Endothelial cell of umbilical vein (primary cell): ENCODE measurements at regions of chr3 and their contacts with region 1.

Region 1: DNA sequence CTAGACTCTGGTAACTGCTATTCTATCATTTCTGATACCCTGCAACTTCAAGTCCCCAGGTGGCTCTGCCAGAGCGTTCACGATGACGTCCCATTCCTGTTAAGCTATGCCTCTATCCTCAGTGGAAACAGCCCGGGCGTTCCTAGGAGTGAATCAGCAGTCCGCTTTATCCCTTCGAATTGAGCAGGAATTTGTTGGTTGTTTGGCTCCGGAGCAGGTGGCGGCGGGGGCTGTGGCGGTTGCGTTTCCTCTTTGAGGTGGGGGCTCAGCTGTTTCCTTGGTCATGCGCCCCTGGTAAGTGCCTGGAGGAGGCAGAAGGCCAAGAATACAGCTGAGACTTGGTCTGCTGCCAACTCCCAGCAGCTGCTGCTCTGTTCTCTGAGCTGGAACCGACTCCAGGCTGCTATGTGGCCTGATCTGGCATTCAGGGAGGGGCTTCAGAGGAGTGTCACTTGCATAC is 25.2 kb downstream of the ARPP21 start:
- DNase-seq: peak; percentile 86
- H3K4me3 ChIP-seq: no peak overlapping the region
- H3K27ac ChIP-seq: no peak overlapping the region
- H3K4me1 ChIP-seq: peaks cover 25% of the 10 kb centered on the region
- H3K27me3 ChIP-seq: no peaks in the 10 kb centered on the region
- CTCF ChIP-seq: no peak
- POLR2A ChIP-seq: no peak

Region 2: DNA sequence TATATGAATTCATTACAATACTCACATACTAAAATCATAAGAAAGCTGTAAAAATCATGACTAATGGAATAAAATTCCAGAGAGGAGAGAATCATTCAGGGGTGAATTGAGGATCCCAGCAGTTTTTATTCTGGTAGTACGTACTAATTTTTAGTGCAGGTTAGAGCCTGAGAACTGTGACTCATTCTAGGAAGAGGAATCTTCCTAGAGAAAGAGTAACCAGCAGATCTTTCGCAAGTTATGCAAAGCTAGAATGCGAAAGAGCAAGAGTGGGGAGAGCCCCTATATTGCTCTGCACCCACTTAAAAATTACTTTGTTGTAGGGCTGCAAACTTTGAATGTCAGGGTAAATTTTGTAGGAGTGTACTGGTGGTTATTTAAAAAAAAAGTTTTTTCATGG is 328.8 kb before region 1 on chr3:
- CTCF ChIA-PET with region 1: no interaction called
- POLR2A ChIA-PET with region 1: no interaction called
- dilution Hi-C with region 1: no loop called
- intact Hi-C with region 1: loop called (anchors 1 kb)
- DNase-seq: no peak
- H3K4me3 ChIP-seq: no peak overlapping the region
- H3K27ac ChIP-seq: no peak overlapping the region
- H3K4me1 ChIP-seq: peaks cover 13% of the 10 kb centered on the region
- H3K27me3 ChIP-seq: no peaks in the 10 kb centered on the region
- CTCF ChIP-seq: no peak
- POLR2A ChIP-seq: no peak